Activated B cell treated with CpG ODN at 0.5 μM for 24 hours (primary cell): ENCODE measurements at regions of chr13 and their contacts with region 1.

Region 1: GRCh38 chr13:73876323-73876722 is 257.9 kb downstream of the KLF12 start:
- DNase-seq: no peak
- ATAC-seq: no peak
- H3K4me3 Mint-ChIP-seq: no peak overlapping the region
- H3K27ac Mint-ChIP-seq: no peak overlapping the region
- H3K4me1 Mint-ChIP-seq: peaks cover 33% of the 10 kb centered on the region
- H3K27me3 Mint-ChIP-seq: no peaks in the 10 kb centered on the region
- CTCF ChIP-seq: no peak

Region 2: GRCh38 chr13:73647417-73647816 is 228.9 kb before region 1 on chr13:
- CTCF ChIA-PET with region 1: no interaction called
- POLR2A ChIA-PET with region 1: no interaction called
- intact Hi-C with region 1: no loop called
- DNase-seq: no peak
- ATAC-seq: no peak
- H3K4me3 Mint-ChIP-seq: no peak overlapping the region
- H3K27ac Mint-ChIP-seq: no peak overlapping the region
- H3K4me1 Mint-ChIP-seq: no peaks in the 10 kb centered on the region
- H3K27me3 Mint-ChIP-seq: peaks cover 1% of the 10 kb centered on the region
- CTCF ChIP-seq: no peak

Region 3: DNA sequence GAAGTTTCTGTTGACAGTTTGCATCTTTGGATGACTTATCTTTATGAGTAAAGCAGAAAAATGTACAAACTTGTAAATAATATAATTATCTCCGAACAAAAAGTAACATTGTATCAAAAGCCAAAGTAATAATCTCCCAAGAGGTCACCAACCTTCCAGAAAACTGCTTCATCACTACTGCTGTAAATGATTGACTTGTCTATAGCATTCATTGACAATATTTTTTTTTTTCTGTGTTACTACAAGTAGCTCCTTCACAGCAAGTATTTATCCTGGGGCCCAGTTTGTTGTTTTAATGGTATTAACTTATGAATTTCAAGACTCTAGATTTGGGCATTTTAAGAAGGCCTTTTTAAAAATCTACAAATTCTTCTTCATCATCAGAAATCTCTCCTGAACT is 15.5 kb after region 1 on chr13:
- CTCF ChIA-PET with region 1: no interaction called
- POLR2A ChIA-PET with region 1: no interaction called
- intact Hi-C with region 1: loop called (anchors 2 kb)
- DNase-seq: no peak
- ATAC-seq: no peak
- H3K4me3 Mint-ChIP-seq: no peak overlapping the region
- H3K27ac Mint-ChIP-seq: no peak overlapping the region
- H3K4me1 Mint-ChIP-seq: no peaks in the 10 kb centered on the region
- H3K27me3 Mint-ChIP-seq: no peaks in the 10 kb centered on the region
- CTCF ChIP-seq: no peak